ENCODE measurements at regions of chr2 and their contacts with region 1.

Region 1: GRCh38 chr2:230411570-230412370 is 4.2 kb upstream of the SP100 start:
- DNase-seq: peak in 8 of 9 experiments; percentile 37 to 83 (median 59)
- ATAC-seq: peak; percentile 67
- H3K4me3 ChIP-seq: peak overlapping the region; percentile 88 to 92
- H3K4me3 Mint-ChIP-seq: peak overlapping the region; percentile 100
- H3K27ac ChIP-seq: peak overlapping the region; percentile 83 to 92
- H3K27ac Mint-ChIP-seq: peak overlapping the region; percentile 100
- H3K4me1 ChIP-seq: peaks cover 53% of the 10 kb centered on the region
- H3K4me1 Mint-ChIP-seq: peaks cover 81% of the 10 kb centered on the region
- H3K27me3 ChIP-seq: no peaks in the 10 kb centered on the region
- H3K27me3 Mint-ChIP-seq: no peaks in the 10 kb centered on the region
- CTCF ChIP-seq: no peak

Region 2: DNA sequence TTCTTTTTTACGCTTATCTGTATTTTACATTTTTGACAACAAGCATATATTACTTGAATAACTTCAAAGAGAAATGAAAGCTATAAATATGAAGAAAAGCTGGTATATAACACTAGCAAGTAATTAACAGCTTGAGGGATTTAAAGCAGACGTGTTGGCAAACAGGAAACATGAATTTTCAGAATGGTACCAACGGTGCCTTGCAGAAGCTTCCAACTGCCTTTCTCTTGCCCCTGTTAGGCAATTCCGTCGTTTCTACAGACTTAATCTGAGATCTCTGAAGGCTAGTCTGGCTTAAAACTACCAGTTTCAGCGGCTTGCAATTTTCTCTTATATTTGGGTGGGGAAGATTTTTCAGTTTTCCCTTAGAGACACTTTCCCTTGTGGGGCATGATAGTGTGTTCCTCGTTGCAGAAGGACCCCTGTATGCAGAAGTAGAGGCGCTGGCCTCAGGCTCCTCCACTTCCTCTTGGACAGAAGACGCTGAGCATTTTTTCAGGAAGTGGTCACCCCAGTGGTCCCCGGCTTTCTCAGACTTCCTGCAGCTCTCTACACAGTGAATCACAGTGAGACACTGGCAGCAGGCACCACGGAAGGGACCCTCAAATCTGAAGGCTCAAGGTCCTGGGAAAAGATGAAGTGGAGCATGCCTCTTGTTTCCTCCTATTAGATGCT is 286.9 kb before region 1 on chr2:
- CTCF ChIA-PET with region 1: no interaction called
- POLR2A ChIA-PET with region 1: no interaction called
- intact Hi-C with region 1: no loop called
- DNase-seq: peak in 3 of 9 experiments; percentile 3 to 27 (median 7)
- ATAC-seq: no peak
- H3K4me3 ChIP-seq: no peak overlapping the region
- H3K4me3 Mint-ChIP-seq: peak overlapping the region; percentile 44
- H3K27ac ChIP-seq: no peak overlapping the region
- H3K27ac Mint-ChIP-seq: no peak overlapping the region
- H3K4me1 ChIP-seq: peaks cover 12% of the 10 kb centered on the region
- H3K4me1 Mint-ChIP-seq: peaks cover 18% of the 10 kb centered on the region
- H3K27me3 ChIP-seq: no peaks in the 10 kb centered on the region
- H3K27me3 Mint-ChIP-seq: no peaks in the 10 kb centered on the region
- CTCF ChIP-seq: no peak

Region 3: DNA sequence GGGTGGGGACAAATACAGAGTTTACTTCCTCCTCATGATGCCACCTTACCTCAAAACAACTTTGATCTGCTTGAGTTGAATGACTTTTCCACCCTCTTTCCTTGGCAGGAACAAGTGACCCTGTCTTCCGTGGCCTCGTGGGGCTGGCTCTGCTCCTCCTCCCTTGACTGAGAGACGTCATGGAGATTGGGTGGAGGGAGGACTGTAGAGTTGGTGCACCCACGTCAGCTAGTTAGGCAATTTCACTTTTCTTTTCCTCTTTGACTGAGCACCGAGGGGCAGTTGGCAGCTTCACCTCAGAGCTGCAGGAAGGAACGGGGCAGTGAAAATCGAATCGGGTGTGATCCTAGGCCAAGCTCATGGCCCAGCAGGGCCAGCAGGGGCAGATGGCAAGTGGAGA is 186.3 kb before region 1 on chr2 and contains the start of gene SP140:
- CTCF ChIA-PET with region 1: no interaction called
- POLR2A ChIA-PET with region 1: no interaction called
- intact Hi-C with region 1: loop called (anchors 1 to 2 kb)
- DNase-seq: peak; percentile 51 to 94 (median 73)
- ATAC-seq: peak; percentile 89
- H3K4me3 ChIP-seq: peak within 1 kb of the TSS; percentile 50 to 66
- H3K4me3 Mint-ChIP-seq: peak within 1 kb of the TSS; percentile 81
- H3K27ac ChIP-seq: peak within 1 kb of the TSS; percentile 57 to 95
- H3K27ac Mint-ChIP-seq: peak within 1 kb of the TSS; percentile 94
- H3K4me1 ChIP-seq: peaks cover 22% of the 10 kb centered on the region
- H3K4me1 Mint-ChIP-seq: peaks cover 57% of the 10 kb centered on the region
- H3K27me3 ChIP-seq: no peaks in the 10 kb centered on the region
- H3K27me3 Mint-ChIP-seq: no peaks in the 10 kb centered on the region
- CTCF ChIP-seq: no peak
- total RNA-seq, gene SP140: 48.6 to 49.3 TPM

Region 4: GRCh38 chr2:230441227-230441897 is 29.6 kb after region 1 on chr2:
- CTCF ChIA-PET with region 1: no interaction called
- POLR2A ChIA-PET with region 1: interaction called, 3 read pairs
- intact Hi-C with region 1: loop called (anchors 2 to 5 kb)
- DNase-seq: peak in 8 of 9 experiments; percentile 37 to 79 (median 58)
- ATAC-seq: peak; percentile 85
- H3K4me3 ChIP-seq: no peak overlapping the region
- H3K4me3 Mint-ChIP-seq: peak overlapping the region; percentile 59
- H3K27ac ChIP-seq: peak overlapping the region; percentile 8 to 50
- H3K27ac Mint-ChIP-seq: peak overlapping the region; percentile 89
- H3K4me1 ChIP-seq: peaks cover 48% of the 10 kb centered on the region
- H3K4me1 Mint-ChIP-seq: peaks cover 55% of the 10 kb centered on the region
- H3K27me3 ChIP-seq: no peaks in the 10 kb centered on the region
- H3K27me3 Mint-ChIP-seq: no peaks in the 10 kb centered on the region
- CTCF ChIP-seq: no peak

Region 5: GRCh38 chr2:230453006-230453405 is 41.2 kb after region 1 on chr2:
- CTCF ChIA-PET with region 1: interaction called, 3 read pairs
- POLR2A ChIA-PET with region 1: no interaction called
- intact Hi-C with region 1: loop called (anchors 5 kb)
- DNase-seq: no peak
- ATAC-seq: no peak
- H3K4me3 ChIP-seq: no peak overlapping the region
- H3K4me3 Mint-ChIP-seq: no peak overlapping the region
- H3K27ac ChIP-seq: no peak overlapping the region
- H3K27ac Mint-ChIP-seq: peak overlapping the region; percentile 15
- H3K4me1 ChIP-seq: peaks cover 24% of the 10 kb centered on the region
- H3K4me1 Mint-ChIP-seq: peaks cover 73% of the 10 kb centered on the region
- H3K27me3 ChIP-seq: no peaks in the 10 kb centered on the region
- H3K27me3 Mint-ChIP-seq: no peaks in the 10 kb centered on the region
- CTCF ChIP-seq: no peak

Measured in CD8-positive, alpha-beta T cell (primary cell).